Heart left ventricle (tissue), 16 donors: ENCODE measurements at regions of chr17 and their contacts with region 1.

Region 1: GRCh38 chr17:43418441-43419374 is 19.9 kb downstream of the ARL4D start:
- DNase-seq: peak in 3 of 5 donors; percentile 41 to 77 (median 76)
- ATAC-seq: peak; percentile 61 to 88 (median 76)
- H3K4me3 ChIP-seq: no peak overlapping the region
- H3K27ac ChIP-seq: peak overlapping the region in 6 of 12 donors; percentile 24 to 86 (median 62)
- H3K4me1 ChIP-seq: peaks cover 0 to 28% (median 16%) of the 10 kb centered on the region in 12 donors
- H3K27me3 ChIP-seq: peaks cover 0 to 4% (median 0%) of the 10 kb centered on the region in 9 donors
- CTCF ChIP-seq: no peak
- POLR2A ChIP-seq: no peak

Region 2: GRCh38 chr17:43456661-43457361 is 38.1 kb after region 1 on chr17:
- intact Hi-C with region 1: loop called in 1 of 10 experiments (anchors 5 kb)
- DNase-seq: peak in 3 of 5 donors; percentile 16 to 61 (median 56)
- ATAC-seq: peak; percentile 75 to 91 (median 80)
- H3K4me3 ChIP-seq: no peak overlapping the region
- H3K27ac ChIP-seq: peak overlapping the region in 9 of 12 donors; percentile 8 to 73 (median 47)
- H3K4me1 ChIP-seq: peaks cover 0 to 27% (median 9%) of the 10 kb centered on the region in 12 donors
- H3K27me3 ChIP-seq: no peaks in the 10 kb centered on the region
- CTCF ChIP-seq: no peak
- POLR2A ChIP-seq: no peak

Region 3: DNA sequence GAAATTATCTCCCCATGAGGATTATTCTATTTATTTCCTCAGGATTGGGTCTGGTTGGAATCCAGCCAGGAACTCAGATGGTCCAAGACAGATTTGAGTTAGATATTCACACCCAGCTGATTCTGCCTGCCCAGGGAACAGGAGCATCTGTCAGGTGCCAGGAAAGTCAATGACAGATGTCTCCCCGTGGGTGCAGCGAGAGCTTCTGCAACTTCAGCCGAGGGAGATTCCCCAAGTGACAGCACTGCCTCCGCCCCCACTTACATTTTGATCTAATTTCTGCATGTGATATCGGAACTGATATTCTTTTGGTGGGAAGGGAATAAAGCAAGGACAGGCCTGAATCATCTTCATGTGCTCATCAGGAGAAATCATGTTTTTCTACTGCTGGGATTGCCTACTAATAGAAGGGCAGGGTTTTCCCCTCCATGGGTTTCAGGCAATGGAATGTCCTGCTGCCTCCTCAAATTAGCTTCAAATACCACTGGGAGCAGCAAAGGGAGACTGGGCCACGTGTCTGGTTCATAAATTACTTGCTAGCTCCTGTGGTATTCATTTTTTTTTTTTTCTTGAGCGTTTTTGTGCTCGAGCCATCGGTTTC is 49.4 kb after region 1 on chr17:
- intact Hi-C with region 1: loop called in 2 of 10 experiments (anchors 5 kb)
- DNase-seq: no peak
- ATAC-seq: peak in 1 of 4 donors; percentile 44
- H3K4me3 ChIP-seq: no peak overlapping the region
- H3K27ac ChIP-seq: no peak overlapping the region
- H3K4me1 ChIP-seq: peaks cover 0 to 17% (median 3%) of the 10 kb centered on the region in 12 donors
- H3K27me3 ChIP-seq: no peaks in the 10 kb centered on the region
- CTCF ChIP-seq: no peak
- POLR2A ChIP-seq: no peak

Region 4: DNA sequence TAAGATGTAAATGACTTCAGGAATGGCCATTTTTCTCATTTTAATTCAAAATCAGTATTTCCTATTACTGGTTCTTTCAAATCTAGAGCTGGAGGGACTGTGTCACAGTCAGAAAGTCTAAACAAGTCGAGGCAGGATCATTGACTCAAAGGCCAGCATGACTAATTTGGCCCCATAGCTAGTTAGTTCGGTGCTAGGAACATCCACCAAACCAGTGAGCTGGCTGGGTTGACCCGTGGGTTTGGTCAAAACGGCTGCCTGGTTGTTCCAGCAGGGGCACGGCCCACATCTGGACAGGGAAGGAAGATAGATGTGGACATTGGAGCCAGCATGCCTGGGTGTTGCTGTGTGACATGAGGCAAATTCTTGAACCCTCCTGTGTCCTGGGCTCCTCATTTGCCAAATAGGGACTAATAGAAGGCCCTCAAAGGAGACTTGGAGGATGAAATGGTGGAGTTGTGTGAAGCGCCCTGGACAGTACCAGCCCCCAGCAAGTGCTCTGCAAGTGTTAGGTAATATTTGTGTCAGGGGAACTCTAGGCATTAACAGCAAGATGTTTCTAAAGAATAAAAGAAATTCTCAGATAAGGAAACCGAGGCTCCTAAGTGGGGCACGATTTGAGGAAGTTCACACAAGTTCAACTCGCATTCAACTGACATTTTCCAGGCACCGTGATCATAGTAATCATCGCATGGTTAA is 196.8 kb after region 1 on chr17:
- intact Hi-C with region 1: no loop called
- DNase-seq: no peak
- ATAC-seq: no peak
- H3K4me3 ChIP-seq: no peak overlapping the region
- H3K27ac ChIP-seq: no peak overlapping the region
- H3K4me1 ChIP-seq: peaks cover 0 to 7% (median under 1%) of the 10 kb centered on the region in 12 donors
- H3K27me3 ChIP-seq: no peaks in the 10 kb centered on the region
- CTCF ChIP-seq: no peak
- POLR2A ChIP-seq: no peak